Aorta (tissue), 5 donors: ENCODE measurements at regions of chr10 and their contacts with region 1.

Region 1: DNA sequence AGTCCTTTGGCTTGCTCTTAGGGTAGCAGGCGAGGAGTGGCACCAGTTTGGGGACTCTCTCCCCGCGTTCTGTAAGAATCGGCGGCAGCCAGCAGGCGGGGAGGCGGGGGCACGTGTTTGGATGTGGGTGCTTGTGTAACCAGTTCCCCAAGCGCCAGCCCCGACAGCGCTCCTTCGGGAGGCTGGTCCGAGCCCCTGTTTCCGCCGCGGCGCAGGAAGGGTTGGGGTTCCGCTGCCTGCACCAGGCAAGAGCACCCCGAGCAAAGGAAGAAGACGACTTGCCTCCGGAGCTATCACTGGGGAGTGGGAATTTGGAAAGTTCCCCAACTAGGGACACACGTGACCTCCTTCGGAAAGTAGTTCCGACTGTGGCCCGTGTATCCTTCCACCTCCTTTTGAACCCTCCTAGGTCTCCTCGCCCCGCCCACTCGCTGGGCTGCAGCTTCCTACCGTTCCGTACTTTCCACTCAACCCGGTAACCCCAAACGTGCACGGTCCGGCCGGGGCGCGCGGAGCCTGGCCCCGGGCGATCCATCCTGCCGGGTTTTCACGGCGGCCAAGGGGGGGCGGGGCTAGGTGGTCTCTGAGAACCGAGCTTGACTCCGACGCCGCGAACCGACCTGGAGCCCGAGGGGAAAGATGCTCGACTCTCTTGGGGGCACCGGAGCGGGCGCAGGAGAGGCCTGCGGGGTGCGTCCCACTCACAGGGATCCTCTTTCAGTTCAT is 1.2 kb downstream of the KLLN start:
- DNase-seq: peak; percentile 98
- ATAC-seq: peak; percentile 95
- H3K4me3 ChIP-seq: peak overlapping the region; percentile 94 to 99
- H3K27ac ChIP-seq: peak overlapping the region; percentile 8 to 91
- H3K4me1 ChIP-seq: no peaks in the 10 kb centered on the region
- H3K27me3 ChIP-seq: no peaks in the 10 kb centered on the region

Region 2: GRCh38 chr10:87925570-87925969 is 63.5 kb after region 1 on chr10:
- intact Hi-C with region 1: loop called (anchors 10 kb)
- DNase-seq: no peak
- ATAC-seq: no peak
- H3K4me3 ChIP-seq: no peak overlapping the region
- H3K27ac ChIP-seq: no peak overlapping the region
- H3K4me1 ChIP-seq: peaks cover 0 to 4% of the 10 kb centered on the region in 2 donors
- H3K27me3 ChIP-seq: no peaks in the 10 kb centered on the region

Region 3: DNA sequence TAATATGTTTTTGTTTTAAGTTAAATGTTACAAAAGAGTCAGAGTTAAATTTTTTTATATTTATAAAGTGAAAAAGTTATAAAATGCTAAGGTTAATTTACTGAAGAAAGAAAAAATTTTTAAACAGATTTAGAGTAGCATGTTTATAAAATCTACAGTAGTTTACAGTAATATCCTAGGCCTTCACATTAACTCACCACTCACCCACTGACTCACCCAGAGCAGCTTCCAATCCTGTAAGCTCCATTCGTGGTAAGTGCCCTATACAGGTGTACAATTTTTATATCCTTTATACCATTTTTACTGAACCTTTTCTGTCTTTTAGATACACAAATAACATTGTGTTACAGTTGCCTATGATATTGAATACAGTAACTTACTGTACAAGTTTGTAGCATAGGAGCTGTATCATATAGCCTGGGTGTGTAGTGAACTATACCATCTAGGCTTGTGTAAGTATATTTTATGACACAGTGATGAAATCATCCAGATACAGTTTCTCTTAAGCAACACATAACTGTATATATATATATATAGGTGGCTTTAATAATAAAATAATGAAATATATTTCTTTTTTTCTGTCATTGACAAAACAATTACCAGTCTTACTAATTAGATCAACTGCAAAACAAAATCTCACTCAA is 80.9 kb after region 1 on chr10:
- intact Hi-C with region 1: loop called (anchors 5 to 10 kb)
- DNase-seq: no peak
- ATAC-seq: no peak
- H3K4me3 ChIP-seq: no peak overlapping the region
- H3K27ac ChIP-seq: no peak overlapping the region
- H3K4me1 ChIP-seq: peaks cover 2% of the 10 kb centered on the region in 2 donors
- H3K27me3 ChIP-seq: no peaks in the 10 kb centered on the region

Region 4: DNA sequence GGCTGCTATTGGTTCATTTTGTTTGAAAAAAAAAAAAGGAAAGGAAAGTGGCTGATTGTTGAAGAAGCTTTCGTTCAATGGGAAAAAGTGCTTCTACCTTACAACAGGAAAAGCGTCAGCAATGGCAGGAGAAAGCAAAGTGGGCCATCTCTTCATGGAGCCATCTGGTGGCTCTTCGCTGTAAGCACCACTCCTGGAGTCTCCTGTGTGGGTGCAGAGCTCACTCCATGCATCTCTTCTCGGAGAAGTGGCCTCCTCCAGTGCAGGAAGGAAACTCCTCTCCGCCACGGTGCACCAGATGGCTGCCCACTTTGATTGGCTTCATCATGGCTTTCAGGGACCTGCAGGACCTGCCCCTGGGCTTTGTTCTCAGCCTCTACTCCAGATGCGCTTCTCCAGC is 252.3 kb after region 1 on chr10:
- intact Hi-C with region 1: loop called in 1 of 2 experiments (anchors 5 kb)
- DNase-seq: no peak
- ATAC-seq: peak; percentile 73
- H3K4me3 ChIP-seq: no peak overlapping the region
- H3K27ac ChIP-seq: no peak overlapping the region
- H3K4me1 ChIP-seq: peaks cover 2 to 3% of the 10 kb centered on the region in 2 donors
- H3K27me3 ChIP-seq: no peaks in the 10 kb centered on the region

Region 5: DNA sequence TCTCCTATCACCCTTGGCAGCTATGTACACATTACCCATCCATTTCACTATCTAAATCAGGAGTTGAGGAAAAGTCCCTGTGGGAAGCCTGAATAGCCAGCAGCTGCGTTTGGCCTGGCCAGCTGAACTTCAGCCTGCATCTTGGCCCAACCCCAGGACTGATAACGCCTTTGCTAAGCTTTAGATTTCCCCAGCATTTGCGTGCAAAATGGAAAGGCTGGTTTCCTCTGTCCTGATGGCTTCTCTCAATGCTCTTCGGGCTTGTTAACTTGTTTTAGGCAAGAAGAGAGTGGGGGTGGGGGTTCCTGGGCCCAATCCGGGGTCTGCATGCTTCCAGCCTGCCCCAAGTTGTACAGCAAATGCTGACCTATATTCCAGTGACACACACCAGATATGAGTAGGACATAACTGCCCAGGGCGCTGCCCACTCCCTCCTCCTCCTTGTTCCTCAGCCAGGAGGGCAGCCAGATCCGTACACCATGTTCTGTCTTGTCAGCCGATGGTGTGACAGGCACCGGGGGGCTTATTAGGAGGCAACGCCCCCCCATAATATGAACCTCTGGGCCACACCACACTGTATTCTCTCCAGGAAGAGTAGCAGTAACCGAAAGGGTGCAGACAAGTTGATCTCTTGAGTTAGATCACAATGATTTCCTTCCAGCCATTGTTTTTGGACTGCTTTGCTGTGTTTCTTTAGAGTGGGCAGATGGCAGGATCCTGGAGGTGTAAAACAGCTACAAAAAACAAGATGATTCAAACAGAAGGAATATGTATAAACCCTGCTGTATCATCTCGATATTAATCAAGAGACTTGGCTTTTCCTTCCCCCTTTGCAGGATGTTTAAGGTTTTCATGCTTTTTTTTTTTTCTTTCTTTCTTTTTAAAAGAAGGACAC is 382.0 kb after region 1 on chr10:
- intact Hi-C with region 1: loop called in 1 of 2 experiments (anchors 10 kb)
- DNase-seq: peak; percentile 75 to 78
- ATAC-seq: peak; percentile 74
- H3K4me3 ChIP-seq: no peak overlapping the region
- H3K27ac ChIP-seq: peak overlapping the region in 1 of 2 donors; percentile 33
- H3K4me1 ChIP-seq: peaks cover 0 to 11% of the 10 kb centered on the region in 2 donors
- H3K27me3 ChIP-seq: no peaks in the 10 kb centered on the region

Region 6: GRCh38 chr10:88386821-88387773 is 525.0 kb after region 1 on chr10:
- intact Hi-C with region 1: loop called (anchors 2 kb)
- DNase-seq: no peak
- ATAC-seq: peak; percentile 88
- H3K4me3 ChIP-seq: peak overlapping the region; percentile 31 to 90
- H3K27ac ChIP-seq: peak overlapping the region; percentile 68 to 82
- H3K4me1 ChIP-seq: no peaks in the 10 kb centered on the region
- H3K27me3 ChIP-seq: no peaks in the 10 kb centered on the region

Region 7: GRCh38 chr10:88499569-88500470 is 637.7 kb after region 1 on chr10:
- intact Hi-C with region 1: no loop called
- DNase-seq: peak in 1 of 2 donors; percentile 26
- ATAC-seq: no peak
- H3K4me3 ChIP-seq: no peak overlapping the region
- H3K27ac ChIP-seq: no peak overlapping the region
- H3K4me1 ChIP-seq: no peaks in the 10 kb centered on the region
- H3K27me3 ChIP-seq: no peaks in the 10 kb centered on the region